Panc1 (cell line): ENCODE measurements at regions of chr11 and their contacts with region 1.

Region 1: DNA sequence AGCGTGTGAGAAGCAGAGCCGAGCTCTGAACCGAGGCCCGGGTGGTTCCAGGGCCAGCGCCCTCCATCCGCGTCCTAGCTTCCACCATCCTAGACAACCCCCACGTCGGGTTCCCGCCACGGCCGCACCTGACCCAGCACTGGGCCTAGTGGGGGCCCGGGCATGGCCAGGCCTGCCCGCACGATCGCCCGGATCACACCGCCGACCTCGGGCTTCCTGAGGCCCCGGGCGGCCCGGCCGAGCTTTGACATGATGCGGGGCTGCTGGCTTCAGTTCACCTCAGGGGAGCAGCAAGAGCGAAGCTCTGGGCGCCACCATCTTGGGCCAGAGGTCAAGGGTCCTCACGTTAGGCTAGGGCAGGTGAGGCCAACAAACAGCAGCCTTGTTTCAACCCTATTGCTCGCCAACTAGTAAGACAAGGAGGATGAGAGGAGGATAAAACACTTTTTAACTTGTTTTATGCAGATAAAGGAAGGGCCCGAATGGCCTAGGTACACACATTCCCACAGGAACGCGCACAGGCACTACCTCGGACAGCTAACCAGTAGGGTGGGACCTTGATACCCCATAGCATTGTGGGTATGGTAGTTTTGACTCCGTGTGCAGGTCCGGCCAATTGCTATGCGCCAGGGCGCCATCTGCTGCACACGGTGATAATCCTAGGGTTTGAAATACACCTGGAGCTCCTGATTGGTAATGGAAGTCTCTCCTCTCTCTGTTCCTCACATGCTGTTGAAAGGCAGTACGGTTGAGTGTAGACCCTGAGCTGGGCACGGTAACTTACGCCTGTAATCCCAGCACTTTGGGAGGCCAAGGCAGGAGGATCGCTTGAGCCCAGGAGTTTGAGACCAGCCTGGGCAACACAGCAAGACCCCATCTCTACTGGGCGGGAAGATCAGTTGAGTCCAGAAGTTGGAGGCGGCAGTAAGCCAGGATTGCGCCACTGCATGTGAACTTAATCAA is at the start of gene MRPL11:
- DNase-seq: peak; percentile 97
- ATAC-seq: peak; percentile 98
- H3K4me3 ChIP-seq: peak within 1 kb of the TSS; percentile 97 to 100
- H3K27ac ChIP-seq: peak within 1 kb of the TSS; percentile 99
- H3K4me1 ChIP-seq: peaks cover 5% of the 10 kb centered on the region; the same call in 1 of the 2 replicates
- H3K27me3 ChIP-seq: no peaks in the 10 kb centered on the region
- CTCF ChIP-seq: peak; percentile 97
- total RNA-seq, gene MRPL11: 158 TPM

Region 2: GRCh38 chr11:66386171-66387069 is 52.4 kb before region 1 on chr11:
- CTCF ChIA-PET with region 1: interaction called, 12 read pairs
- POLR2A ChIA-PET with region 1: no interaction called
- in situ Hi-C with region 1: no loop called
- intact Hi-C with region 1: no loop called
- DNase-seq: peak; percentile 81
- ATAC-seq: peak; percentile 91
- H3K4me3 ChIP-seq: peak overlapping the region; percentile 24 to 40
- H3K27ac ChIP-seq: peak overlapping the region; percentile 48; the same call in 1 of the 2 replicates
- H3K4me1 ChIP-seq: 0 out of 2 replicates have a peak, but pooled peaks cover 5% of the 10 kb centered on the region
- H3K27me3 ChIP-seq: no peaks in the 10 kb centered on the region
- CTCF ChIP-seq: peak; percentile 97

Region 3: DNA sequence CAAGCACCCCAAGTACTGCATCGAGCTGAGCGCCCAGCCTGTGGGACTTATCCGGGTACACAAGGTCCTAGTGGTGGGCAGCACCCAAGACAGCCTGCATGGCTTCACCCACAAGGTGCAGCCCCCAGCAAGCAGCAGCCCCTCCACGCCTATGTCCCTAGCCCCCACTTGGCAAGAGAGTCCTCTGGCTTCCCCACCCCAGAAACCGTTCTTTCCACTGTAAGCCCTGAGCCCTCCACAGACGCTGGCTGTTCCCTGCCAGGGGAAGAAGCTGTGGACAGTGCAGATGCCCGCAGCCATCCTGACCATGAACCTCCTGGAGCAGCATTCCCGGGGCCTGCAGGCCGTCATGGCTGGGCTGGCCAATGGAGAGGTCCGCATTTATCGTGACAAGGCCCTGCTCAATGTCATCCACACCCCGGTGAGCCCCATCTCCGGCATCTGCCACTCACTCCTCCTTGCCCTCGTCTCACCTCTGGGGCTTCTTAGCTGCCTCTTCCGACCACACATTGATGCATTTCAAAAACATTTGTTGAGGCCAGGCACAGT is 84.8 kb after region 1 on chr11:
- CTCF ChIA-PET with region 1: no interaction called
- POLR2A ChIA-PET with region 1: interaction called, 23 read pairs
- in situ Hi-C with region 1: no loop called
- intact Hi-C with region 1: no loop called
- DNase-seq: no peak
- ATAC-seq: no peak
- H3K4me3 ChIP-seq: no peak overlapping the region
- H3K27ac ChIP-seq: no peak overlapping the region
- H3K4me1 ChIP-seq: no peaks in the 10 kb centered on the region
- H3K27me3 ChIP-seq: no peaks in the 10 kb centered on the region
- CTCF ChIP-seq: no peak

Region 4: DNA sequence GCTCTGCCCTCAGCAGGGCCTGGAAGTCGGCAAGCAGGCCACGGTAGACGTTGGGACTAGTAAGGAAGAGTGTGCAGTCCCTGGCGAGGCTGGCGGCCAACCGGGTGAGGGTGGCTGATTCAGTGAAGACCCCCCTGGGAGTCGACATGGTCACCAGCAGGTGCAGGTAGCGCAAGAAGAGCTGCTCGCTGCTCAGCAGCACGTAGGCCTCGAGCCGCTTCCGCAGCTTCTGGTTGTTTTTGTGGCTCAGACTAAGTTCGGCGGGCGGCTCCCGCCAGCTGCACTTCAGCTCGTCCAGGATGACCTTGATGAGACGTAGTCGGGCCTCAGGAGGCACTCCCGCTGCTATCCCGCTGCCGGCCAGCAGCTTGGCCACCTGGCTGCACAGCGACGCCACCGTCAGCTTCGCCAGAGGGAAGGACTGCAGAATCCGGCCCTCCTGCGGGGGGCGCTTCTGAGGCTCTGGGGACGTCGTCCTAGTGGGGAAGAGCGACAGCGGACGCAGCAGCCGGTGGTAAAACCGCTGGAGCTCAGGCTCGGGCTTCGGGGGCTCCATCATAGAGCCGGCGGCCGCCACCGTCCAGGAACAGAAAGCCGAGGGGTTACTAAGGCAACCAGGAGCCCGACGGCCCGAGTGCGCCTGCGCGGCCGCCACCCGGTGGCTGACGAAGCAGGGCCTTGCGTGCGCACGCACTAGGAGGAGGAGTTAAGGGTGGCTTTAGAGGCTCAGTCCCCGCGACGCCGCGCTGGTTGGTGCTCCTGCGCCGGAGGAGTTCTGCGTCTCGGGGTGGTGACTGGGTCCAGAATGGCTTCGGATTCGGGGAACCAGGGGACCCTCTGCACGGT is 153.9 kb after region 1 on chr11 and contains the starts of genes CCDC87 and CCS:
- CTCF ChIA-PET with region 1: no interaction called
- POLR2A ChIA-PET with region 1: no interaction called
- in situ Hi-C with region 1: no loop called
- intact Hi-C with region 1: no loop called
- DNase-seq: peak; percentile 86
- ATAC-seq: peak; percentile 99
- H3K4me3 ChIP-seq: peak within 1 kb of the TSS; percentile 88 to 95
- H3K27ac ChIP-seq: peak within 1 kb of the TSS; percentile 96
- H3K4me1 ChIP-seq: peaks cover 8% of the 10 kb centered on the region
- H3K27me3 ChIP-seq: no peaks in the 10 kb centered on the region
- CTCF ChIP-seq: peak; percentile 92
- total RNA-seq, gene CCDC87: 2.0 TPM
- total RNA-seq, gene CCS: 55.3 TPM